GM12878 (cell line): ENCODE measurements at regions of chr10 and their contacts with region 1.

Region 1: GRCh38 chr10:86376852-86377796 is 10.5 kb upstream of the GRID1 start:
- DNase-seq: no peak
- ATAC-seq: peak; percentile 99
- H3K4me3 ChIP-seq: 0 out of 2 replicates have a peak overlapping the region, but pooled peaks have one; percentile 32
- H3K27ac ChIP-seq: no peak overlapping the region
- H3K4me1 ChIP-seq: no peaks in the 10 kb centered on the region
- H3K27me3 ChIP-seq: no peaks in the 10 kb centered on the region; a peak in 1 of 4 replicates
- CTCF ChIP-seq: peak; percentile 91 to 92 (median 91); a peak in 5 of 6 replicates
- EP300 ChIP-seq: no peak
- POLR2A ChIP-seq: no peak
- RAD21 ChIP-seq: peak; percentile 74

Region 2: DNA sequence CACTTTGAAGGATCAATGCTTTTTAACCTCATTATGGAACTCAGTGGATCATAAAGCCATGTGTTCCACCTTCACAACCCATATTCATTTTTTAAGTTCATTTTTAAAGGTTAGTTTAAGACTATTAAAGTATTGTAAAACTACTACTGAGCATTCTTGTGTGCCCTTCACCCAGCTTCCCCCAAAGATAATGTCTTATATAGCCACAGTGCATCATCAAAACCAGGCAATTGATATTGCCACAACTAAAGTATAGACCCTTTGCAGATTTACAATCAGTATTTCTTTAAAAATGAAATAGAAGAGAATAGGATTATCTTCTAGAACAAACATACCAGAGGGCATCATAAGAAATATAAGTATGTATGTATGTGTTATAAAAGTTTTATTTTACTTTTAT is 1451.6 kb before region 1 on chr10:
- CTCF ChIA-PET with region 1: no interaction called
- POLR2A ChIA-PET with region 1: no interaction called
- RAD21 ChIA-PET with region 1: no interaction called
- SMC1A ChIA-PET with region 1: no interaction called
- in situ Hi-C with region 1: loop called (anchors 5 kb)
- intact Hi-C with region 1: loop called (anchors 5 kb)
- DNase-seq: no peak
- ATAC-seq: no peak
- H3K4me3 ChIP-seq: no peak overlapping the region
- H3K27ac ChIP-seq: no peak overlapping the region
- H3K4me1 ChIP-seq: no peaks in the 10 kb centered on the region
- H3K27me3 ChIP-seq: no peaks in the 10 kb centered on the region
- CTCF ChIP-seq: no peak
- EP300 ChIP-seq: no peak
- POLR2A ChIP-seq: no peak
- RAD21 ChIP-seq: no peak

Region 3: DNA sequence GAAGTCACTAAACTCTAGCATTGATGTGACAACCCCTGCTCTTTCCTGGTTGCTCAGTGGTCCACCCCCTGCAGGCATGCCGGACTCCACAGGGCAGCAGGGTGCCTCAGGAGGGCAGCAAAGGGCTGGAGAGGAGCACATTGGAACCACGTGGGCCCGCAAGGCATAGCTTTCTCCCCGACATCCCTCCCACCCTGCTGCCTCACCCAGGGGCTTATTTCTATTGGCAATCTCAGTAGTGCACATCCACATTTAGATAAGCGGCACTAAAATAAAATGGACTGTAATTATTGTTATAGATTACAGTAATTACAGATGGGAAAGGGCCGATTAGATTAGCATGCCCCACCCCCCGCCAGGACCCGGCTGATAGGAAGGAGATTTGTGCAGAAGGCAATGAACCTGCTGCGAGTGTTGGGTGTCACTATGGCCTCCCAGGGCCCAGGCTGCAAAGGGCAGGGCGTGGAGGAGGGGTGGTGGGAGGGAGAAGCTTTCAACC is 590.7 kb before region 1 on chr10:
- CTCF ChIA-PET with region 1: no interaction called
- POLR2A ChIA-PET with region 1: no interaction called
- RAD21 ChIA-PET with region 1: no interaction called
- SMC1A ChIA-PET with region 1: no interaction called
- in situ Hi-C with region 1: no loop called
- intact Hi-C with region 1: loop called (anchors 10 kb)
- DNase-seq: no peak
- ATAC-seq: peak; percentile 84
- H3K4me3 ChIP-seq: no peak overlapping the region
- H3K27ac ChIP-seq: no peak overlapping the region
- H3K4me1 ChIP-seq: no peaks in the 10 kb centered on the region
- H3K27me3 ChIP-seq: no peaks in the 10 kb centered on the region; a peak in 2 of 4 replicates
- CTCF ChIP-seq: peak; percentile 15 to 47 (median 42); a peak in 4 of 6 replicates
- EP300 ChIP-seq: no peak
- POLR2A ChIP-seq: no peak
- RAD21 ChIP-seq: peak; percentile 38; the same call in 1 of the 2 replicates

Region 4: DNA sequence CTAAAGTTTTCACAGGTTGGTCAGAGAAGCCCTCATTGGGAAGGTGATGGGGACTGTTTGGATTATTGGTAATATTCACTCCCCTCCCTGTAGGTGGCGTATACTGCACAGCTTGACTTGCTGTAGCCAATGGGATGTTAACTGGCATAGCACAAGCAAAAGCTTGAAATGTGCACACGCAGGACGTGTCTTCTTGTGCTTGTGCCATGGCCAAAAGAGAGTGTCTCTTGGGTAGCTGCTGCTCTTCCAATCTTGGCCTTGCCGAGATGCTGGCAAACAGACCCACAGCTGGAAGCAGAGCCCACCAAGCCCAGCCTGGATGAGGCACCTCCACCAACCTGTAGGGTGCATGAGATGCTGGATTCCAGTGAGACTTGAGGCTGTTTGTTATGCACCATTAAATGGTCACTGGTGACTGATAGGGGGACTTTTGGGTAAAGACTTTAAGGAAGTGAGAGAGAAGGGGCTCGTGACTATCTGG is 276.5 kb before region 1 on chr10:
- CTCF ChIA-PET with region 1: no interaction called
- POLR2A ChIA-PET with region 1: no interaction called
- RAD21 ChIA-PET with region 1: no interaction called
- SMC1A ChIA-PET with region 1: no interaction called
- in situ Hi-C with region 1: no loop called
- intact Hi-C with region 1: loop called (anchors 5 kb)
- DNase-seq: no peak
- ATAC-seq: peak; percentile 88
- H3K4me3 ChIP-seq: no peak overlapping the region
- H3K27ac ChIP-seq: no peak overlapping the region
- H3K4me1 ChIP-seq: no peaks in the 10 kb centered on the region
- H3K27me3 ChIP-seq: no peaks in the 10 kb centered on the region; a peak in 1 of 4 replicates
- CTCF ChIP-seq: peak; percentile 35 to 60 (median 43); a peak in 5 of 6 replicates
- EP300 ChIP-seq: no peak
- POLR2A ChIP-seq: no peak
- RAD21 ChIP-seq: peak; percentile 44

Region 5: DNA sequence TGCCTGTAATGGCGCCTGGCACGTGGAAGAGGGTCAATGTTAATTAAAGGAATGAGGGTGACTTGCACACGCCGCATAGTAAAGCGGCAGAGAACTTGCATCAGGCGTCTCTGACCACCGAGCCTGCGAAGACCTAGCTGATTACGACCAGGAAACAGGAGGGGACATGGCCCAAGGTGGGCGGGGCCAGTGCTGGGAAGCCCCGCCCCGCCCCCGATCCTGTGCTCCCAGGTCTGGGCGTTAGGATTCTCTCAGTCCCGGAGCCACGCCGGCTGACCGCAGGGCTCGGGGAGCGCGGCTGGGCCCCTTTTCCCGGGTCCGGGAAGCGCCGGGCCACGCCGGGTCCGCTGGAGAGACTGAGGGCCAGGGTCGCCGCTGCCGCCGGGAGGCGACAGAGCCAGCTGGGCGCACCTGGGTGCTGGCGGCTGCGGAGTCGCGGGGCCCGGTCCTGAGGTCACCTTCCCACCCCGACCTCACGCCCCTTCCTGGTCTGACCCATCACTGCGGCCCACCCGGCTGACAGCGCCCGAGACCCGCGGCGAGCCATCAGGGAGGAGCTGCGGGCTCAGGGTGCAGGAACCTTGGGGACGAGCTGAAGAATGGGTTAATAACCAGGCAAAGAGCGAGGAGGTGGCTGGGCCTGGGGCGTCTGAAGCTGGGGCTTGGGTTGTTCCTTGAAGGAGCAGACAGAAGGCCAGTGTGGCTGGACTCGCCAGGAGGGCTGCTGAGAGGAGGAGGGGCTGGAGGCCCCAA is 12.5 kb after region 1 on chr10:
- CTCF ChIA-PET with region 1: interaction called, 20 read pairs
- POLR2A ChIA-PET with region 1: no interaction called
- RAD21 ChIA-PET with region 1: interaction called, 3 read pairs
- SMC1A ChIA-PET with region 1: interaction called, 4 read pairs
- in situ Hi-C with region 1: no loop called
- intact Hi-C with region 1: no loop called
- DNase-seq: no peak
- ATAC-seq: peak; percentile 85
- H3K4me3 ChIP-seq: peak overlapping the region; percentile 87
- H3K27ac ChIP-seq: peak overlapping the region; percentile 91
- H3K4me1 ChIP-seq: peaks cover 36% of the 10 kb centered on the region
- H3K27me3 ChIP-seq: no peaks in the 10 kb centered on the region
- CTCF ChIP-seq: peak; percentile 21 to 40 (median 21); a peak in 3 of 6 replicates
- EP300 ChIP-seq: no peak
- POLR2A ChIP-seq: peak; percentile 71
- RAD21 ChIP-seq: no peak

Region 6: GRCh38 chr10:86506499-86506898 is 129.4 kb after region 1 on chr10:
- CTCF ChIA-PET with region 1: no interaction called
- POLR2A ChIA-PET with region 1: no interaction called
- RAD21 ChIA-PET with region 1: no interaction called
- SMC1A ChIA-PET with region 1: no interaction called
- in situ Hi-C with region 1: no loop called
- intact Hi-C with region 1: no loop called
- DNase-seq: no peak
- ATAC-seq: peak; percentile 55
- H3K4me3 ChIP-seq: 0 out of 2 replicates have a peak overlapping the region, but pooled peaks have one; percentile 2
- H3K27ac ChIP-seq: no peak overlapping the region
- H3K4me1 ChIP-seq: peaks cover 6% of the 10 kb centered on the region
- H3K27me3 ChIP-seq: no peaks in the 10 kb centered on the region
- CTCF ChIP-seq: no peak
- EP300 ChIP-seq: no peak
- POLR2A ChIP-seq: no peak
- RAD21 ChIP-seq: no peak

Region 7: GRCh38 chr10:86613905-86614304 is 236.8 kb after region 1 on chr10:
- CTCF ChIA-PET with region 1: no interaction called
- POLR2A ChIA-PET with region 1: no interaction called
- RAD21 ChIA-PET with region 1: no interaction called
- SMC1A ChIA-PET with region 1: no interaction called
- in situ Hi-C with region 1: no loop called
- intact Hi-C with region 1: no loop called
- DNase-seq: no peak
- ATAC-seq: no peak
- H3K4me3 ChIP-seq: no peak overlapping the region
- H3K27ac ChIP-seq: no peak overlapping the region
- H3K4me1 ChIP-seq: no peaks in the 10 kb centered on the region
- H3K27me3 ChIP-seq: no peaks in the 10 kb centered on the region
- CTCF ChIP-seq: no peak
- EP300 ChIP-seq: no peak
- POLR2A ChIP-seq: no peak
- RAD21 ChIP-seq: no peak